ENCODE measurements at regions of chr10 and their contacts with region 1.

Region 1: DNA sequence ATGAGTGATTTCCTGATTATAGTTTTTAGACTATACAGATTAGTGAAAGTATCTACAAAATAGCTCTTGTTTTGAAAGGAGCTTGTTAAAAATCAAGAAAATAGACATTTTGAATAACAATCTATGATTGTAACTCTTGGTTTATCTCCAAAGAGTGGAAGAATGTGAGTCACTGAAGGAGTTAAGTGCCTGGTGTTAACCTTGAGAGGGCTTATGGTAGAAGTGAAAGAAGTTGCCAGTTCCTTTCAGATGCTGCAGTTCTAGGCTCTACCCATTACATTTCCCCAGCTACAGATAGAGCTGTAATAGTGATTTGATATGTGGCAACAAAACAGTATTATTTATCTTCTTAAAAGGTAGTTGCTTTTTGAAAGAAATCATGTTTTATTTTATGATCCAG is 12.7 kb downstream of the NRBF2 start:
- DNase-seq: no peak
- H3K4me3 Mint-ChIP-seq: no peak overlapping the region
- H3K27ac Mint-ChIP-seq: no peak overlapping the region
- H3K4me1 Mint-ChIP-seq: peaks cover 42% of the 10 kb centered on the region
- H3K27me3 Mint-ChIP-seq: no peaks in the 10 kb centered on the region

Region 2: GRCh38 chr10:62050893-62051433 is 1094.8 kb before region 1 on chr10:
- CTCF ChIA-PET with region 1: no interaction called
- intact Hi-C with region 1: no loop called
- DNase-seq: peak; percentile 91
- H3K4me3 Mint-ChIP-seq: peak overlapping the region; percentile 94
- H3K27ac Mint-ChIP-seq: peak overlapping the region; percentile 100
- H3K4me1 Mint-ChIP-seq: peaks cover 87% of the 10 kb centered on the region
- H3K27me3 Mint-ChIP-seq: no peaks in the 10 kb centered on the region

Region 3: GRCh38 chr10:62858364-62858763 is 287.4 kb before region 1 on chr10:
- CTCF ChIA-PET with region 1: no interaction called
- intact Hi-C with region 1: loop called (anchors 5 kb)
- DNase-seq: no peak
- H3K4me3 Mint-ChIP-seq: no peak overlapping the region
- H3K27ac Mint-ChIP-seq: no peak overlapping the region
- H3K4me1 Mint-ChIP-seq: peaks cover 32% of the 10 kb centered on the region
- H3K27me3 Mint-ChIP-seq: peaks cover 12% of the 10 kb centered on the region

Region 4: DNA sequence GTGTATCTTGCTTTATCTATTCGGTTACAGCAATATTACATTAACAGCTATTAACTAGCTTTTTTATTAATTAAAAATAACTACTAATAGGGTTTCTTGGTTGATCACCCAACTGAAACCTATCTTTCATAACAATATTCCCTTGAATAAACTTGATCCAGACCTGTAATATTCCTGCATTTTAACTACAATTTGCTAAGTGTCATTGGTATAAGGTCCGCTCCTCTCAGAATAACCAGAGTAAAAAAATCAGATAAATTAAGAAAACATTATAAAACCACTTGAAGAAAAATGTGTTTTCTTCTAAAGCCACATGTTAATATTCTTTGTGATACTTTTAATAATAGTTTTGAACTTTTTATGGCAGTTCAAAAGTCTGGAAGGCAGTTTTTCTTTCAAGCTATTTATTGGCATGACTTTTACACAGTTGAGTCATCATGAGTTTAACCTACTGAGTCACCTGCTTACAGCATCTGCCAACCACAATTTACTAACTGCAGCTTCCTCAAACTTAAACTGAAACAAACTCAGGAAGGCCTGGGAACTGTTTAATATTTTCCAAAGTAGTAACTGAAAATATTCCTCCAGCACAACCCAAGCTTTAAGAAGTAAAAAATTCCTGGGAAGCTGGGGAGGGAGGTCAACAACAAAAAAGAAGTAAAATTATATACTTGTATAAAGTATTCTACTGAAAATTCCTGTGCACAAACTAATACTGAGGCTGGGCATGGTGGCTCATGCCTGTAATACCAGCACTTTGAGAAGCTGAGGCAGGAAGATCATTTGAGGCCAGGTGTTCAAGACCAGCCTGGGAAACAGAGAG is 90.5 kb after region 1 on chr10:
- CTCF ChIA-PET with region 1: no interaction called
- intact Hi-C with region 1: no loop called
- DNase-seq: no peak
- H3K4me3 Mint-ChIP-seq: no peak overlapping the region
- H3K27ac Mint-ChIP-seq: peak overlapping the region; percentile 66
- H3K4me1 Mint-ChIP-seq: peaks cover 58% of the 10 kb centered on the region
- H3K27me3 Mint-ChIP-seq: no peaks in the 10 kb centered on the region

Measured in activated naive CD4-positive, alpha-beta T cell treated with anti-CD3 and anti-CD28 coated beads for 36 hours (primary cell).